Aorta (tissue), 5 donors: ENCODE measurements at regions of chr17 and their contacts with region 1.

Region 1: GRCh38 chr17:31842183-31843069 is 16.6 kb downstream of the COPRS start:
- DNase-seq: peak; percentile 75 to 82
- ATAC-seq: peak; percentile 94
- H3K4me3 ChIP-seq: no peak overlapping the region
- H3K27ac ChIP-seq: peak overlapping the region in 1 of 2 donors; percentile 91
- H3K4me1 ChIP-seq: peaks cover 0 to 7% of the 10 kb centered on the region in 2 donors
- H3K27me3 ChIP-seq: no peaks in the 10 kb centered on the region

Region 2: DNA sequence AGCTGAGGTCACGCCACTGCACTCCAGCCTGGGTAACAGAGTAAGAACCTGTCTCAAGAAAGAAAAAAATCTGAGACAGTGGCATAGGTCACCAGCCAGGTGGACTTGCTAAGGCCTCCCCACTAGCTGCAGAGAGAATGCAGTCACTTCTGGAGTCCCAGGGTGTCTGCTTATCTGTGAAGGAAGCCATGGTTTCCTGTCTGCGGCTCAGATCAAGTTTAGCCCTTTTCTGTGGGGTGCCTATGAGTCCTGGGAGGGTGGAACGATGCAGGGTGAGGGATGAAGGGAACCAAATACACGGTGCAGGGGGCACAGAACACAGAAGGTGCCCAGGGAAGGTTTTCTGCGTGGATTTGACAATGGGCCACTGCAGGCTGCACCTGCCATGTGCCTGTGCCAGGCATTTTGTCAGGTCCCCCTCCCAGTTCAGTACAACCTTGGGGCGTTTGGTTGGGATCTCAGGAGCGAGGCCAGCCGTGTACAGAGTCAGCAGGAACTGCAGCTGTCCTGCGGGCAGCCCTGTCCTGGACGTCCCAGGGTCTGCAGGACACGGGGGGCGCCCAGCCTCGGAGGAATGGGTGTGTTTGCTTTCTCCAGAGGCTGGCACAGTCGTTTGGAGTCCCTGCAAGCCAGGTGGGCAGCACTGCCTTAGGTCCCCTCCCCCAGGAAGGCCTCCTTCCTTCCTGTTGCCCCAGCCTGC is 409.2 kb before region 1 on chr17:
- intact Hi-C with region 1: loop called in 1 of 2 experiments (anchors 5 kb)
- DNase-seq: no peak
- ATAC-seq: no peak
- H3K4me3 ChIP-seq: no peak overlapping the region
- H3K27ac ChIP-seq: no peak overlapping the region
- H3K4me1 ChIP-seq: no peaks in the 10 kb centered on the region
- H3K27me3 ChIP-seq: no peaks in the 10 kb centered on the region

Region 3: GRCh38 chr17:31558748-31559644 is 283.4 kb before region 1 on chr17:
- intact Hi-C with region 1: loop called (anchors 1 kb)
- DNase-seq: peak; percentile 89 to 94
- ATAC-seq: peak; percentile 92
- H3K4me3 ChIP-seq: peak overlapping the region; percentile 74 to 97
- H3K27ac ChIP-seq: peak overlapping the region; percentile 79 to 96
- H3K4me1 ChIP-seq: peaks cover 0 to 3% of the 10 kb centered on the region in 2 donors
- H3K27me3 ChIP-seq: no peaks in the 10 kb centered on the region

Region 4: DNA sequence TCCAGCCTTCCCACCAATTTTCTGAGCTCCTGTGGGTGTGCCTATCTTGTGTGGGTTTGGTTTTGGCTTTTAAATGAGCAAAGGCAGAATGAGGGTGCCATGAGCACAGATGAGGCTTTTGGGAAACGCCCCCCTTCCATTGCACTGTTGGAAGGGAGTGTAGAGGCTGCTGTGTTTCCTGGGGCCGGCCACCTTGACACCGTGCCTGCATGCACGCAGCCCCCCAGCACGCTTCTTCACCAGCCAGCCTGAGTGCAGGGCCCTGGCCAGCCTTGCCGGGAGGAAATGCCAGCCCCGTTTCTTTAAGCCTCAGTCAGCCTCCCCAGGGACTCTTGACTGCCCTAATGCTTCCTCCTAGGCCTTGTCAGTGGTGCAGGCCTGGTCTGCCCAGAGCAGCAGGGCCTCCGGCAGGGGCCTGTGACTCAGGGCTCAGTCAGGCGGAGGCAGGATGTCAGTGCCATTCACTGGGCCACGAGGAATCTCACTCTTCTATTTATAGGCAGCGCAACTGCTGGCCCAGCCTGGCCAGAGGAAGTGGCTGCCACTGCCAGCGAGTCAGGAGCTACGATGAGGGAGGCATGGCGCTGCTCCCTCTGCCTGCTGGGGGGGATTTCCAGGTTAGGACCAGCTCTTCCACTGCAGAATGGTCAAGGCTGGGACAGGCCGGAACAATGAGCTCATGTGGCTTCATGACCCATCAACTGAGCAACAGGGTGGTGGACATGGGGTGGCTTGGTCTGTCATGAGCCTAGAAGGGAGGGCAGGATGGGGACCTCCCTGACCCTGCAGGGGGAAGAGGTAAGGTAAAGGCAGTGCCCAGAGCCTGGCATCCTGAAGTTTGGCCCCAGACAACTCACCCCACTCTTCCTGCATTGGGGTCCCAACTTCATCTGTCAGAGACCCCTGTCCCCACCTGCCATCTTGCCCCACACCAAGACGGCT is 245.8 kb before region 1 on chr17:
- intact Hi-C with region 1: loop called in 1 of 2 experiments (anchors 1 kb)
- DNase-seq: peak; percentile 94 to 97
- ATAC-seq: peak; percentile 94
- H3K4me3 ChIP-seq: no peak overlapping the region
- H3K27ac ChIP-seq: peak overlapping the region; percentile 70 to 91
- H3K4me1 ChIP-seq: peaks cover 0 to 11% of the 10 kb centered on the region in 2 donors
- H3K27me3 ChIP-seq: no peaks in the 10 kb centered on the region

Region 5: DNA sequence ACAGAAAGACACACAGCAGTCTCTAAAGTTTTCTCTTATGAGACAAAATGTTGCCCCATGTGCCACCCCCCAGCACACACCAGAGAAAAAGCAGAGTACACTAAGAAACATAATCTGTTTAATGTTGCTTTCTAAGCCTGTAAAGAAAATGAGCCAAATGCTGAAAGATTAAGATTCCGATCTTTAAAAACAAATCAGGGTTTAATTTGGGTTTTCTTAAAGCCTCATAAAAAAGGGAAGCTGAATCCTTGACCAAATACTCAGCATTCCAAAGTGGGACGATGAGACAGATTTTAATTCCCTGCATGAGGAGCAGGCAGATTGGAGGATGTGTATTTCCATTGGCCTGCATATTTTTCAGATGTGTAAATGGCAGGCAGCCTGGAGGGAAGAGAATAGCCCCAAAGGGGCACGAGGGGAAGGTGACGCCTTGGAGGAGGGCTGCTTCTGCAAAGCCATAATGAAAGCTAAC is 101.8 kb before region 1 on chr17:
- intact Hi-C with region 1: loop called in 1 of 2 experiments (anchors 5 kb)
- DNase-seq: no peak
- ATAC-seq: no peak
- H3K4me3 ChIP-seq: no peak overlapping the region
- H3K27ac ChIP-seq: peak overlapping the region in 1 of 2 donors; percentile 58
- H3K4me1 ChIP-seq: peaks cover 2 to 8% of the 10 kb centered on the region in 2 donors
- H3K27me3 ChIP-seq: no peaks in the 10 kb centered on the region

Region 6: DNA sequence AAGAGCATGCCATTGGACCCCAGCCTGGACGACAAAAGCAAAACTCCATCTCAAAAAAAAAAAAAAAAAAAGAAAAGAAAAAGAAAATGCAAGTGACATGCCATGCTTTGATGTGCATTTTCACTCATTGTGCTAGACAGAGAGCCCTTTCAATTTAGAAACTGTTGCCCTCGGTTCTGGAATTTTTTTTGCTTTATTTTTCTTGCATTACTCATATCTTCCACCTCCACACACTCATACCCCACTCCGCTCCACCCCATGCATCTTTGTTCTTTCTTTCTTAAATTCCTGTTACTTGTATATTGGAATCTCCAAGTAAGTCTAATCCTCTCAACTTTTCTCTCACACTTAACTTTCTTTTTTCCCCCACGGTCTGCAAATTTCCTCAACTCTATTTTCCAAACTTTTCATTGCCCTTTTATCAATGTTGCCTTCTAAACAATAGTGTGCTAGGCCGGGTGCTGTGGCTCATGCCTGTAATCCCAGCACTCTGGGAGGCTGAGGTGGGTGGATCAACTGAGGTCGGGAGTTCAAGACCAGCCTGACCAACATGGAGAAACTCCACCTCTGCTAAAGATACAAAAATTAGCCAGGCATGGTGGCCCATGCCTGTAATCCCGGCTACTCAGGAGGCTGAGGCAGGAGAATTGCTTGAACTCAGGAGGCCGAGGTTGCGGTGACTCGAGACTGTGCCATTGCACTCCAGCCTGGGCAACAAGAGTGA is 77.5 kb after region 1 on chr17:
- intact Hi-C with region 1: no loop called
- DNase-seq: no peak
- ATAC-seq: no peak
- H3K4me3 ChIP-seq: no peak overlapping the region
- H3K27ac ChIP-seq: no peak overlapping the region
- H3K4me1 ChIP-seq: peaks cover 0 to 1% of the 10 kb centered on the region in 2 donors
- H3K27me3 ChIP-seq: no peaks in the 10 kb centered on the region

Region 7: DNA sequence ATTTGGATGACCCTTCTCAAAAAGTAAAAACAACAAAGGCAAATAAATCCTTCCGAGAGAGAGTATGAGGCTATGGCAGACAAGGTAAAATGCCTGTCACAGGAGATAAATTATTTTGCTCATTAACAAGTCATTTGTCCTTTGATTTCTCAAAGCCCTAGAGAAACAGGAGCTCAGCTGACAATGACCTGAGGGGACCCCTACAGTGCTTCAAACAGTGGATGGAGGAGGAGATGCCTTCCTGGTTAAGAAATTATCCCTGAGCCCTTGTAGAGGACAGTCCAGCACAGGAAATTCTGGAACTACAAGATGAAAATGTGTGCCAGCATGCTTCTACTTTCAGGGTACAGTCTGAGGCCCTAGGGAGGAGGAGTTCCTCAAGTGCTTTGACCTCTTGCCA is 399.2 kb after region 1 on chr17:
- intact Hi-C with region 1: no loop called
- DNase-seq: no peak
- ATAC-seq: no peak
- H3K4me3 ChIP-seq: no peak overlapping the region
- H3K27ac ChIP-seq: no peak overlapping the region
- H3K4me1 ChIP-seq: no peaks in the 10 kb centered on the region
- H3K27me3 ChIP-seq: no peaks in the 10 kb centered on the region